Right ventricle myocardium inferior (tissue), 1 donor: ENCODE measurements at regions of chr4 and their contacts with region 1.

Region 1: DNA sequence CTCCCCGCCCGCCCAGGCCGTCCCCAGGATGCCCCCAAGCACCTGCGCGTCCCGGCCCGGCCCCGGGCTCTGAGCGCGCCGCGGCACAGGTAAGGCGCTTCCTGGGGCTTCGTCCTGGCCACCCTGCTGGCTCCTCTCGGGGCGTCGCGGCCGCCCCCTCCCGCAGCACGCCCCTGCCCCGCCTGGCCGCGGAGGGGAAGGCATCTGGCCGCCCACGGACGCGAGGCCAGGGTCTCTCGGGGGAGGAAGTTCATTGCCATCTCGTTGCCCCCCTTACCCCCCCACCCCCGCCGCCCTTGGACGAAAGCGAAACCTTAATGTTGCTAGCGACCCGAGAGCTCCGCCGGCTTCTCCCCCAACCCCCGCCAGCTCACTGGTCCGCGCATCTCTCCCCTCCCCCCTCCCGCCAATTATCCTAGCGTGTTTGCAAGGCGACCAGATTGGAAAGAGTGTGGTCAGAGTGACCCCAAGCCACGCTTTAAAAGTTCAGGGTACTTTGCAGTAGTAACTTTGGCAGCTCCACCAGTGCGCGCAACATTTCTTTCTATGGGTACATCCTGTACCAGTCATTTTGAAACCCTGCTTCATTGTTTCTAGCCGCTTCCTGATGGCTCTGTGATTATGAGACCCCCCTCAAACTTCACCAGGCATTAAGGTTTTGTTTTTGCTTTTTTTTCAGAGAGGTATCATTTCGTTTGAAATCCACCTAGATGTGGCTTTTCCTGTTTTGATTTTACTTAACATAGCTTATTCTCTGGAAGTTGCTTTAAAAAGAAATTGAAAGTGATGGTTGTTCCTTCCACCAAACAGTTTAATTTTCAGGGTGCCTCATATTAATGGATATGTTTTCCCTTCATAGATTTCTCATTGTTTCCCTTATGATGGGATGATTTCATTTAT is 626 bp downstream of the TBC1D1 start:
- DNase-seq: no peak
- ATAC-seq: peak; percentile 19

Region 2: DNA sequence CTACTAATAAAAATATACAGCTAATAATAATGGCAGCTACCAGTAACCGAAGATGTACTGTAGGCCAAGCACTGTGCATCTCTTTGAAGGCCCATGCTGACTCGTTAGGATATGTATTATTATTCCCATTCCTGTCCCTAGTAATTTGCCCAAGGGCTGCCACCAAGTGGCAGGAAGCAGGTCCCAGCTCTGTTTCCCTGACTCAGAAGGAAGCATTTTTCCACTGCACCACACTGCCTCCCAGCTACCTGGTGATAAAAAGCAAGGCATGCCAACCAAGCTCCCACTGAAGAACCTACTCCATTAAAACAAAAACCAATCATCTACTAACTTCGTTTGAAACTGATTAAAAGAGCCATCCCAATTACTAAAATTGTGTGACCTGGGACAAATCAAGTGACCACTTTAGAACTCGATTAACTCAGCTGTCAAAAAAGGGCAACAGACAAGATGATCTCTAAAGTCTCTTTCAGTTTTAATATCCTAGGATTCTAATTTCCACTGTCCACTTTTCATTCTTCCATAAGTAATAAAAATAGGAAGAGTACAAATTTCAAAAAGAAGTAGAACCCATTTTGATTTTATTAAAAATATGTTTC is 89.3 kb before region 1 on chr4:
- intact Hi-C with region 1: loop called (anchors 2 kb)
- DNase-seq: no peak
- ATAC-seq: peak; percentile 83

Region 3: DNA sequence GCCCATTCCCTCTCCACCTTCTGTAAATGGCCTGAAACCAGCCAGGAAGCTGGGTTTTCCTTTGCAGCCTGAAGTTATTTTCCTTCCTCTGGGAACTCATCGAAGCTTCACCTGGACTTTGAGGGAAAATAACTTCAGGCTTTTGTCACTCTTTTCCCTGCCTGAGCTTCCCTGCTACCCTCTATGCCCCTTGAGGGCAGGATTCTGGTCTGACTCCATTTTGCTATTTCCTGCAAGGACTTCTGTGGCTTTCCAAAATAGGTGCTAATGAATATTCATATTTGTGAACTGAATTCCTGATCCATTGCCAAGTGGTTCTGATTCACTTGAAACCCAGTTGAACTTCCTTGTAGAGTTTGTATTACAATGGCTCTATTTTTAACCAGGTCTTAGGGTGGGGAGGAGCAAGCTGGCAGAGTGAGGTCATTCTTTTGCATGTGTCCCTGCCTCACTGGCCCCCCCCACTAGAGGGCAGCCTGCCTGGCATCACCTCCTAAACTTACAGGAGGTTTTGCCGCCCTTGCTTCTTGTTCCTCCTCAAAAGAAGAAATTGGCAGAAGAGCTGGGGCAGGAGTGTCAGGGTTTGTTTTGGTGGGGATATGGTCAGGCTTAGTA is 79.1 kb after region 1 on chr4:
- intact Hi-C with region 1: loop called (anchors 2 kb)
- DNase-seq: peak; percentile 89
- ATAC-seq: peak; percentile 77

Region 4: DNA sequence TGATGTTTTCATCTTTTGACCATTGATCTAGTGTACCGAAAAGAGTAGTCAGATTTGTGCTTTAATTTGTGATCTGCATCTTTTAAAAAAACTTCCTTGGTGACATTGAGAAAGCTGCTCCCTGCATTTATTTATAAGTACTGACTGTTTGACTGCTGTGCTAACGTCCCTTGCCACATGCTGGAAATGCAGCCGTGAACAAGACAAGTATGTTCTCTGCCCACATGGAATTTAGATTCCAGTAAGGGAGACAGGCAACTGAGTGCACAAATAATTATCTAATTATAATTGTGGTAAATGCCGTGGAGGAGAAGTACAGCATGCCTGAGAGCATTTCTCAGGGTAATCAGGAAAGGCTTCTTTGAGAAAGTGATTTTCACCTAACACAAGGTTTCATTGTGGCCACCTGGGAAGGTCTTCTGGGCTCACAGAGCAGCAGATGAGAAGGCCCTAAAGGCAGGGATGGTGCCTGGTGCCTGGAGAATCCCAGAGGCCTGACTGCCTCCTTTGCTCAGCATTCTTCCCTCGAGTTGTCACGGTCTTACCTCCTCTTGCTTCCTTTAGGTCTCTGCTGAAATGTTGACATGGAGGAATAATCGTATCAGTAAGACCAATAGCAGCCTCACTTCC is 124.5 kb after region 1 on chr4:
- intact Hi-C with region 1: loop called (anchors 5 kb)
- DNase-seq: no peak
- ATAC-seq: no peak

Region 5: GRCh38 chr4:38532908-38533499 is 641.5 kb after region 1 on chr4:
- intact Hi-C with region 1: no loop called
- DNase-seq: no peak
- ATAC-seq: no peak